ENCODE measurements at regions of chr5 and their contacts with region 1.

Region 1: GRCh38 chr5:29588276-29588675 is 1605.2 kb upstream of the CDH6 start:
- DNase-seq: no peak
- ATAC-seq: no peak
- H3K4me3 ChIP-seq: no peak overlapping the region
- H3K4me3 Mint-ChIP-seq: no peak overlapping the region
- H3K27ac ChIP-seq: no peak overlapping the region
- H3K27ac Mint-ChIP-seq: no peak overlapping the region
- H3K4me1 ChIP-seq: no peaks in the 10 kb centered on the region
- H3K4me1 Mint-ChIP-seq: peaks cover 0 to 4% (median 0%) of the 10 kb centered on the region in 7 donors
- H3K27me3 ChIP-seq: no peaks in the 10 kb centered on the region
- H3K27me3 Mint-ChIP-seq: no peaks in the 10 kb centered on the region

Region 2: DNA sequence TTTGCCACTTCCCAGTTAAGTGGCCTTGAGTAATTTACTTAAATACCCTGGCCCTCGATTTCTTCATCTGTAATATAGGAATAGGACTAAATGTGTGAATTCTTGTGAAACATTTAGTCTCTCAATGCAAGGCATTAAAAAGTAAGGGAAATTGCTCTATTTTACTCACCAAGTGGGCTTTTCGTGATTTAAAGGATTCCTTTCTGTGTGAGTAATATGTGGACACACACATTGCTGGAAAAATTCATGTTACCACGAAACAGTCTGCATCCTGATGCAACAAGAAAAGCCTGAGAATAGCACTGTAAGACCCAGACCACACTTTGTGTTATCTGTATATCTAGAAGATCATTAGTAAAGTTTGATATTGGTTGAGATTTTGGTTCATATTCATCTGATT is 1306.9 kb before region 1 on chr5:
- CTCF ChIA-PET with region 1: no interaction called
- POLR2A ChIA-PET with region 1: no interaction called
- intact Hi-C with region 1: no loop called
- DNase-seq: no peak
- ATAC-seq: no peak
- H3K4me3 ChIP-seq: no peak overlapping the region
- H3K4me3 Mint-ChIP-seq: no peak overlapping the region
- H3K27ac ChIP-seq: no peak overlapping the region
- H3K27ac Mint-ChIP-seq: no peak overlapping the region
- H3K4me1 ChIP-seq: no peaks in the 10 kb centered on the region
- H3K4me1 Mint-ChIP-seq: no peaks in the 10 kb centered on the region
- H3K27me3 ChIP-seq: no peaks in the 10 kb centered on the region
- H3K27me3 Mint-ChIP-seq: no peaks in the 10 kb centered on the region

Region 3: GRCh38 chr5:28473531-28474107 is 1114.7 kb before region 1 on chr5:
- CTCF ChIA-PET with region 1: no interaction called
- POLR2A ChIA-PET with region 1: no interaction called
- intact Hi-C with region 1: no loop called
- DNase-seq: no peak
- ATAC-seq: no peak
- H3K4me3 ChIP-seq: no peak overlapping the region
- H3K4me3 Mint-ChIP-seq: no peak overlapping the region
- H3K27ac ChIP-seq: no peak overlapping the region
- H3K27ac Mint-ChIP-seq: no peak overlapping the region
- H3K4me1 ChIP-seq: no peaks in the 10 kb centered on the region
- H3K4me1 Mint-ChIP-seq: no peaks in the 10 kb centered on the region
- H3K27me3 ChIP-seq: no peaks in the 10 kb centered on the region
- H3K27me3 Mint-ChIP-seq: no peaks in the 10 kb centered on the region

Region 4: DNA sequence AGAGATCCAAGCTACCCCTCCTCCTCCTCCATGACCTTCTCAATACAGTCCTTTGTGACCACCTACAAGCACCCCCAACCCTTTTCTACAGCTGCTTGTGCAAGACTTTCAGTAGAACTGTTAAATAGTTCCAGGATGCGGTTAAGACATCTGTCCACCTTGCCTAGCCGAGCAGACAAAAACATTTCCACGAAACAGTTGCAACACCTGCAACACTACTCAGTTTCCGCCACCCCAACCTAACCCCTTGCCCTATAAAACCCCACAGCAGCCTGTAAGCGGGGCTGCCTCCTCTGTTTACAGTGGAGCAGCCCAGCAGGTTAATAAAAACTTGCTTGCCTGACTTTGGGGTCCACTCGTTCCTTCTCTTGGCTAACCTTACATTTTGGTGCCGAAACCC is 198.3 kb before region 1 on chr5:
- CTCF ChIA-PET with region 1: no interaction called
- POLR2A ChIA-PET with region 1: no interaction called
- intact Hi-C with region 1: no loop called
- DNase-seq: no peak
- ATAC-seq: no peak
- H3K4me3 ChIP-seq: no peak overlapping the region
- H3K4me3 Mint-ChIP-seq: no peak overlapping the region
- H3K27ac ChIP-seq: no peak overlapping the region
- H3K27ac Mint-ChIP-seq: no peak overlapping the region
- H3K4me1 ChIP-seq: no peaks in the 10 kb centered on the region
- H3K4me1 Mint-ChIP-seq: no peaks in the 10 kb centered on the region
- H3K27me3 ChIP-seq: no peaks in the 10 kb centered on the region
- H3K27me3 Mint-ChIP-seq: no peaks in the 10 kb centered on the region

Region 5: GRCh38 chr5:29614202-29614601 is 25.9 kb after region 1 on chr5:
- CTCF ChIA-PET with region 1: no interaction called
- POLR2A ChIA-PET with region 1: no interaction called
- intact Hi-C with region 1: loop called in 1 of 2 experiments (anchors 2 kb)
- DNase-seq: no peak
- ATAC-seq: no peak
- H3K4me3 ChIP-seq: no peak overlapping the region
- H3K4me3 Mint-ChIP-seq: no peak overlapping the region
- H3K27ac ChIP-seq: no peak overlapping the region
- H3K27ac Mint-ChIP-seq: no peak overlapping the region
- H3K4me1 ChIP-seq: no peaks in the 10 kb centered on the region
- H3K4me1 Mint-ChIP-seq: no peaks in the 10 kb centered on the region
- H3K27me3 ChIP-seq: no peaks in the 10 kb centered on the region
- H3K27me3 Mint-ChIP-seq: no peaks in the 10 kb centered on the region

Region 6: GRCh38 chr5:30099641-30100072 is 511.4 kb after region 1 on chr5:
- CTCF ChIA-PET with region 1: no interaction called
- POLR2A ChIA-PET with region 1: no interaction called
- intact Hi-C with region 1: no loop called
- DNase-seq: no peak
- ATAC-seq: no peak
- H3K4me3 ChIP-seq: no peak overlapping the region
- H3K4me3 Mint-ChIP-seq: no peak overlapping the region
- H3K27ac ChIP-seq: no peak overlapping the region
- H3K27ac Mint-ChIP-seq: no peak overlapping the region
- H3K4me1 ChIP-seq: no peaks in the 10 kb centered on the region
- H3K4me1 Mint-ChIP-seq: no peaks in the 10 kb centered on the region
- H3K27me3 ChIP-seq: no peaks in the 10 kb centered on the region
- H3K27me3 Mint-ChIP-seq: no peaks in the 10 kb centered on the region

Measured in naive thymus-derived CD4-positive, alpha-beta T cell (primary cell).